BJ (cell line): ENCODE measurements at regions of chr16 and their contacts with region 1.

Region 1: GRCh38 chr16:67521095-67521804 is 7.4 kb upstream of the RIPOR1 start:
- DNase-seq: peak; percentile 59
- H3K4me3 ChIP-seq: peak overlapping the region; percentile 45
- H3K27me3 ChIP-seq: no peaks in the 10 kb centered on the region
- CTCF ChIP-seq: peak; percentile 98

Region 2: DNA sequence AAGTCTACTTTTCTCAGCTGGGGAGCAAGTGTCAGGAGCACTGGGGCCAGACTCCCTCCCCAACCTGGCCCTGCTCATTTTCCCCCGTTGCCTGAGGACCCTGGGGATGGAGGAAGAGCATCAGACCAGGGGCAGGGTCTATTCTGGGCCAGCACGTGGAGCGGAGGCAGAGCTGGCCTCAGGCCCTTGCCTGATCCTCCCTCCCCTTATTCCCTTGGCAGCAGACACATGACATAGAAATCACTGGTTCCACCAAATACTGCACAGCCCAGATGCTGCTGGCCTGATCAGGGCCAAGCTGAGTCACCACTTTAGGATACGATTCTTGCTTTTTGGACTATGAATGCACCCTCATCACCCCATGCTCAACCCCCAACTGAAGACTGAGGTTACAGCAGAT is 22.1 kb before region 1 on chr16:
- CTCF ChIA-PET with region 1: interaction called, 80 read pairs
- POLR2A ChIA-PET with region 1: no interaction called
- DNase-seq: no peak
- H3K4me3 ChIP-seq: no peak overlapping the region
- H3K27me3 ChIP-seq: no peaks in the 10 kb centered on the region
- CTCF ChIP-seq: no peak

Region 3: GRCh38 chr16:67546761-67547422 is 25.6 kb after region 1 on chr16:
- CTCF ChIA-PET with region 1: interaction called, 45 read pairs
- POLR2A ChIA-PET with region 1: no interaction called
- DNase-seq: no peak
- H3K4me3 ChIP-seq: no peak overlapping the region
- H3K27me3 ChIP-seq: no peaks in the 10 kb centered on the region
- CTCF ChIP-seq: peak; percentile 95

Region 4: DNA sequence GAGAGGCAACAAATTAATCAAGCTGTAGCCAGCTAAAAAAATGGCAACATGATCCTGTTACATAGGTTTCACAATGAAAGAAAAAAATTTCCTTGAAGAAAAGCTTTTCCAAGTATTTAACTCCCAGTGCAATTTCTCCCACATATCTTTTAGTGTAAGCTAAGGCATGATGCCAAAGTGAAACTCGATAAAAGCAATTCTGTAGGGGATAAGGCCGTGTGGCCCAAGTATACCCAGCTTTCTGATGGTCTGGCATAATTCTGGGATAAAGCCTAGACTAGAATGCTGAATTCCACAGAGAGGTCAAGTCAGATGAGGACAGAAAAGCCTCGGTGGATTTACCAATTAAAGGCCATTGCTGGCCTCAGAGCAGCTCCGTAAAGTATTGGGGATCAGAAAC is 77.3 kb after region 1 on chr16:
- CTCF ChIA-PET with region 1: interaction called, 11 read pairs
- POLR2A ChIA-PET with region 1: no interaction called
- DNase-seq: no peak
- H3K4me3 ChIP-seq: no peak overlapping the region
- H3K27me3 ChIP-seq: no peaks in the 10 kb centered on the region
- CTCF ChIP-seq: no peak

Region 5: DNA sequence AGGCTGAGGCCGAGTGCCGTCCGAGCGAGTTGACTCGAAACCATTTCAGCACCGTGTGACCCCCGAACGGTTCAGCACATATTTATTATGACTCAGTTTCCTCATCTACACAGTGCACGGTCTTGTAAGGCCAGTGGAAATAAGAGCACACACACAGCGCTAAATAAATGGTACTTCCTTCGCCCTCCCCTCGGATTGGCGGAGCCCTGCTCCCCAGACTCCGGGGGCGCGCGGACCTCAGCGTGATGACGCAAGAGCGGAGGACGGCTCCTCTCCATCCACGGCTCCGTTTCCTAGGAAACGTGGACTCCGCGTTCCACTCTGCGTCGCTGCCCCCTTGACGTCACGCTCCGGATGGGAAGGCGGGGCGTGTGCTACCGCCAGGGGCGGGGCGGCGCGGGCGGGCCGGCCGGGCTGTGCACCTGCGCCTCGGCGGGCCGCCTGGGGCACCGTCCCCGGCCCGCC is 139.3 kb after region 1 on chr16 and contains the start of gene PARD6A:
- CTCF ChIA-PET with region 1: interaction called, 208 read pairs
- POLR2A ChIA-PET with region 1: no interaction called
- DNase-seq: peak; percentile 59
- H3K4me3 ChIP-seq: peak within 1 kb of the TSS; percentile 98
- H3K27me3 ChIP-seq: no peaks in the 10 kb centered on the region
- CTCF ChIP-seq: no peak
- polyA plus RNA-seq, gene PARD6A: 0.86 and 0.88 TPM in 2 replicates

Region 6: GRCh38 chr16:67935402-67936123 is 414.3 kb after region 1 on chr16:
- CTCF ChIA-PET with region 1: interaction called, 10 read pairs
- POLR2A ChIA-PET with region 1: no interaction called
- DNase-seq: peak; percentile 59
- H3K4me3 ChIP-seq: peak overlapping the region; percentile 84
- H3K27me3 ChIP-seq: no peaks in the 10 kb centered on the region
- CTCF ChIP-seq: no peak